Motor neuron (in vitro differentiated cells): ENCODE measurements at regions of chr5 and their contacts with region 1.

Region 1: GRCh38 chr5:139968547-139969261 is 74.4 kb downstream of the NRG2 start:
- ATAC-seq: peak; percentile 99 to 100 (median 100)
- H3K4me3 ChIP-seq: no peak overlapping the region
- H3K27ac ChIP-seq: no peak overlapping the region
- H3K4me1 ChIP-seq: no peaks in the 10 kb centered on the region

Region 2: DNA sequence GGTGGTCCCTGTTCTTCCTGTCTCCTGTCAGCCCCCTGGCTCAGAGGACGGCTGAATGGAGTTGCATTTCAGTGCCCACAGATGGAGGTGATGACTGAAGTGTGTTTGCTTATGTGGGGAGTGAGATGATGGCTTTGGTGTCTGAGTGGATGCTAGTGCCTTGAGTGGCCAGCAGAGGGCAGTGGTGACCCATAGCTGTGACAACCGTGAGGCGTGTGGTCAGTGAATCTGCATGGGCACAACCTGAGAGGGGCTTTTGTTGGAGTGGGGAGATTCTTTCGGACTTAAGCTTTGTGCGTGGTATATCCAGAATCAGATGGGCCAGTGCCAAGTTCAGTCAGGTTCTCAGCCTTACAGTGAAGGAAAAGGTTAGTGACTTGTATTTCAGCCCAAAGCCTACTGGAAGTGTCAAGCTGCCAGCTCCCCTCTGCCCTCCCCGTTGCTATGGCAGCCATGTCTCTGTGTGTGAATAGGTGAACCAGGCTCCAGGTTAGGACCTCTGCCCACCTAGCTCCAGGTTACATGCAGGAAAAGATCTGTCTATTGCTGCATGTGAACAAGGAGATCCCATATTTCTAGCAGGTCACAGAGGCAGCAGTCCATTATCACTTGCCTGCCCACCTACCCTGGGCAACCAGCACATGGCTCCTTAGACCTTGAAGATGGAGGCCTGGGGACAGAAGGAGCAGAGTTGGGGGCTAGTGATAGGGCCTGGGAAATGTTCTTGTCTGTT is 335.2 kb before region 1 on chr5:
- in situ Hi-C with region 1: loop called in 1 of 9 experiments (anchors 25 kb)
- ATAC-seq: peak; percentile 1 to 34 (median 14)
- H3K4me3 ChIP-seq: no peak overlapping the region
- H3K27ac ChIP-seq: no peak overlapping the region
- H3K4me1 ChIP-seq: peaks cover 37 to 47% of the 10 kb centered on the region in 2 donors

Region 3: GRCh38 chr5:139872052-139872766 is 96.5 kb before region 1 on chr5:
- in situ Hi-C with region 1: loop called in 1 of 9 experiments (anchors 10 kb)
- ATAC-seq: no peak
- H3K4me3 ChIP-seq: no peak overlapping the region
- H3K27ac ChIP-seq: no peak overlapping the region
- H3K4me1 ChIP-seq: peaks cover 0 to 17% of the 10 kb centered on the region in 2 donors